HCT116 (cell line): ENCODE measurements at regions of chr12 and their contacts with region 1.

Region 1: GRCh38 chr12:5171701-5172100 is 128.0 kb downstream of the KCNA5 start:
- DNase-seq: peak; percentile 23
- ATAC-seq: peak; percentile 36
- H3K4me3 ChIP-seq: no peak overlapping the region
- H3K27ac ChIP-seq: no peak overlapping the region
- H3K4me1 ChIP-seq: peaks cover 20 to 48% of the 10 kb centered on the region in 2 experiments
- H3K27me3 ChIP-seq: no peaks in the 10 kb centered on the region
- CTCF ChIP-seq: peak; percentile 51 to 75 (median 67); a peak in 5 of 6 replicates
- POLR2A ChIP-seq: no peak
- RAD21 ChIP-seq: peak; percentile 80

Region 2: DNA sequence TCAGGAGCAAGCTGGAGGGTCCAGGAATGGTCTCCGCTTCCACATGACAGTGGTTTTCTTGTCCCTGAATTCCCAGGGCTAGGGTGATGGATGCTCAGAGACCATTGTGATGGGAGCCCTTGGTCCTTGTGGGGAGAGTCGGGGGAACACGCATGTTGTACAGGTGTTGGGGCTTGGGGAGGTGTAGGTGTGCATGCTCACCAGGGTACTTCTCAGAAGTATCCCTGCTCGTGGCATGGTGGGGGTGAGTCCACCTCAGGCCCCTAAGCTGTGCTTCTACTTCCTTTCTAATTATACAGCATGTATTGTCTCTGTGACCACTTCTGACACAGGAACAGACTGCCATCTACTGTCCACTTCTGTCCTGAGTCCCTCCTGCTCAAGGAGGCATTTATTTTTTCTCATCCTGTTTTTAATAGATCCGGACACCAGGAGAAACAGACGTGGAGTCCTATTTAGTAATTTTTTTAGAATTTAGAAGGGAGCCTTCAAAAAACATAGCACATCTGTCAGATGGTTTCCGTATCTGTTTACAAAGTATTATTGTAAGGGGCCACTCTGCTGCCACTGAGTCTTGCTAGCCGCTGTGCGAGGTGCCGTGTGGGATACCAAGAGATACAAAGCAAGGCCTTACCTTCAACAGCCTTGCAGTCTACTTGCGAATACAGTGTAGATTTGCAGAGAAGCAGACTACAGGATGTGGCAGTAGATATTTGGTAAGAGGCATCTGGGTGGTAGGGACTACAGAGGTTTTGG is 270.7 kb after region 1 on chr12:
- CTCF ChIA-PET with region 1: interaction called, 4 read pairs
- POLR2A ChIA-PET with region 1: no interaction called
- RAD21 ChIA-PET with region 1: no interaction called
- intact Hi-C with region 1: loop called (anchors 1 kb)
- DNase-seq: peak; percentile 39
- ATAC-seq: peak; percentile 90
- H3K4me3 ChIP-seq: no peak overlapping the region
- H3K27ac ChIP-seq: no peak overlapping the region
- H3K4me1 ChIP-seq: peaks cover 0 to 13% of the 10 kb centered on the region in 2 experiments; a peak in 3 of 4 replicates
- H3K27me3 ChIP-seq: peaks cover 44% of the 10 kb centered on the region
- CTCF ChIP-seq: peak; percentile 64 to 76 (median 75)
- POLR2A ChIP-seq: no peak
- RAD21 ChIP-seq: peak; percentile 85

Region 3: DNA sequence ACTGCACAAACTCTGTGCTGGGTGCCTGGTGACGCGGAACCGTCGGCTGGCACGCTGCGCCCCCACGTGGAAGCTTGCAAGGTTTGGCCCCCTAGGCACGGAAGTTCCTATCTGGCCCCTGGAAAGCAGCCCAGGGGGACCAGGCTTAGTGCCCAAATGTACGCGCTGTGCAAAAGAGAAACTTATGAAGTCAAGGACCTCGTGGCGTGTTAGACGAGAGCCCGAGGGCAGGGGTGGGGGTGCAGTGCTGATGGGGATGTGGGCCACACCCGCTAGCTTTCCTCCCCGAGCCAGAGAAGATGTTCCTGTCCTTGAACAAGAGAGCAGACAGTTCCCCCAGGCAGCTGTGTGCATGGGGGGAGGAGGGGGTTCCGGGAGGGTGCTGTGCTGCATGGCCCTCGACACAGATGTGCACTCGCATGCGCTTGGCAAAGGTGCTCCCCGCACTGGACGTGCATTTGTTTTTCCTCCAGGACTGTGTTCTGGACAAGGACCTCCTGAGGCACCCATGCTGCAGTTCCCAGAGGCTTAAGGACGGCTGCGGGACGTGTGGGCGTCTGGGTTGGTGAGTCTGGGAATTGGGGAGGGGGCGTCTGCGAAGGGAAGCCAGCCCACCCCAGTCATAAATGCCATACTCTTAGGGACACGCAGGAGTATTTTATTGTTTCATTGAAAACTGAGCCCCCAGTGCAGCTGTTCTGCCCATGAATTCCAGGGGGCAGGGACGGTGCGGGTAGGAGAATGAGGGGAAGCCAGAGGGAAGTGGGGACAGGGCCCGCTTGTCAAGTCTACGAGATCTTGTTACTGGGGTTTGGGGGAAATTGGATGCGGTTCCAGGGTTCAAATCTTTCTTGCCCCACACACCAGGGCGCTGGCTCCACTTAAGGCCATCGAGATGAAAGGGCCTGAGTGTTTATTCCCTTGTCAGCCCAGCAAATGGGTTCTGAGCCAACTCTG is 340.2 kb after region 1 on chr12:
- CTCF ChIA-PET with region 1: no interaction called
- POLR2A ChIA-PET with region 1: no interaction called
- RAD21 ChIA-PET with region 1: no interaction called
- intact Hi-C with region 1: loop called (anchors 5 kb)
- DNase-seq: peak; percentile 18
- ATAC-seq: peak; percentile 91
- H3K4me3 ChIP-seq: no peak overlapping the region
- H3K27ac ChIP-seq: no peak overlapping the region
- H3K4me1 ChIP-seq: no peaks in the 10 kb centered on the region; a peak in 1 of 4 replicates
- H3K27me3 ChIP-seq: no peaks in the 10 kb centered on the region; the same call in 1 of the 2 replicates
- CTCF ChIP-seq: peak; percentile 52 to 80 (median 75); a peak in 5 of 6 replicates
- POLR2A ChIP-seq: no peak
- RAD21 ChIP-seq: peak; percentile 59

Region 4: DNA sequence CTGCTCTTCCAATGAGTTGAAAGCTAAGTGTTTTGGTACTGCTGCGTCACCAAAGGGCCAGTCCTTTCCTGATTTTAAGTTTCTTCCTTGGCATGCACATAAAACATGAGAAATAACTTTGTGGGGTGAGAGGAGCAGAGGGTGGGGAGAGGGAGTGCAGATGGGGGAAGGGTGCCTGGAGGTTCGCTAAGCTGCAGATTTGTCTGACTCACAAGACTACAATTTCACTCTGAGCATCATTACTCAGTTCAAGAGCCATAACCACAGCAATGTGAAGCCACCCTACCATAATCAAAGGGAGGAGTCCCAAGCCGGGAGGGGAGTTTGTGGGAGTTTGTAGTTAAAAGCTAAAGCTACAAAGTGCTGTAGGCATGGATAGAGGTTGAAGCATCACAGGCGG is 637.3 kb after region 1 on chr12:
- CTCF ChIA-PET with region 1: no interaction called
- POLR2A ChIA-PET with region 1: no interaction called
- RAD21 ChIA-PET with region 1: no interaction called
- intact Hi-C with region 1: loop called (anchors 10 kb)
- DNase-seq: peak; percentile 54
- ATAC-seq: peak; percentile 72
- H3K4me3 ChIP-seq: peak overlapping the region in 1 of 2 experiments; percentile 14; a peak in 2 of 4 replicates
- H3K27ac ChIP-seq: peak overlapping the region; percentile 37
- H3K4me1 ChIP-seq: peaks cover 30 to 51% of the 10 kb centered on the region in 2 experiments
- H3K27me3 ChIP-seq: peaks cover 4% of the 10 kb centered on the region; the same call in 1 of the 2 replicates
- CTCF ChIP-seq: no peak
- POLR2A ChIP-seq: no peak
- RAD21 ChIP-seq: no peak

Region 5: GRCh38 chr12:6104027-6104426 is 932.3 kb after region 1 on chr12:
- CTCF ChIA-PET with region 1: no interaction called
- POLR2A ChIA-PET with region 1: no interaction called
- RAD21 ChIA-PET with region 1: no interaction called
- intact Hi-C with region 1: loop called (anchors 10 kb)
- DNase-seq: no peak
- ATAC-seq: no peak
- H3K4me3 ChIP-seq: no peak overlapping the region
- H3K27ac ChIP-seq: no peak overlapping the region
- H3K4me1 ChIP-seq: peaks cover 11 to 22% of the 10 kb centered on the region in 2 experiments
- H3K27me3 ChIP-seq: no peaks in the 10 kb centered on the region
- CTCF ChIP-seq: no peak
- POLR2A ChIP-seq: no peak
- RAD21 ChIP-seq: no peak